Dorsolateral prefrontal cortex (tissue), 120 donors: ENCODE measurements at regions of chr1 and their contacts with region 1.

Region 1: GRCh38 chr1:179293340-179294327 is at the start of gene SOAT1:
- DNase-seq: peak; percentile 88 to 98 (median 95)
- H3K4me3 ChIP-seq: peak within 1 kb of the TSS; percentile 64 to 96 (median 85)
- H3K27ac ChIP-seq: peak within 1 kb of the TSS; percentile 54 to 94 (median 85)
- H3K27me3 ChIP-seq: no peaks in the 10 kb centered on the region
- CTCF ChIP-seq: peak in 48 of 56 donors; percentile 3 to 66 (median 40)
- total RNA-seq, gene SOAT1: 10.1 to 31.3 (median 18.6) TPM

Region 2: GRCh38 chr1:178869119-178869697 is 424.4 kb before region 1 on chr1:
- intact Hi-C with region 1: no loop called
- DNase-seq: no peak
- H3K4me3 ChIP-seq: peak overlapping the region in 30 of 59 donors; percentile 0 to 53 (median 24)
- H3K27ac ChIP-seq: no peak overlapping the region
- H3K27me3 ChIP-seq: no peaks in the 10 kb centered on the region
- CTCF ChIP-seq: no peak

Region 3: DNA sequence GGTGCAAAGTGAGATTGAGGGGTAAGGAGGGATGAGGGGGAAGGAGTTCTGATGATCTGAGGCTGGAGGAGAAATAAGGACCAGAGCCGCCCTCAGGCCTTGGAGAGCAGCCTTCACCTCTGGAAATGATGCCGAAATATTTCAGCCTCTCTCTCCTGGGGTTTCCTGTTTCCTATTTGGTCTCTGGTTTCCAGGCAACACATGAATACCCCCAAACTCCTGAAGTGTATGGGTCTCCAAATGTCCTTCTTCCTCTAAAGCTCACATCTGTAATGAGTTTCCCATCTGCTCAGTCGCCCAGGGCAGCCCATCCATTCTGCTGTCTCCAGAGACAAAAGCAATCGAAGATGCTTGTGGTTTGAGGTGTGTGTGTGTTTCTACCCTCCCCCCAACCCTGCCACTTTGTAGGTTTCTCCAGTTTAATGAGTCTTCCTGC is 319.9 kb before region 1 on chr1:
- intact Hi-C with region 1: no loop called
- DNase-seq: no peak
- H3K4me3 ChIP-seq: no peak overlapping the region
- H3K27ac ChIP-seq: no peak overlapping the region
- H3K27me3 ChIP-seq: no peaks in the 10 kb centered on the region
- CTCF ChIP-seq: no peak

Region 4: DNA sequence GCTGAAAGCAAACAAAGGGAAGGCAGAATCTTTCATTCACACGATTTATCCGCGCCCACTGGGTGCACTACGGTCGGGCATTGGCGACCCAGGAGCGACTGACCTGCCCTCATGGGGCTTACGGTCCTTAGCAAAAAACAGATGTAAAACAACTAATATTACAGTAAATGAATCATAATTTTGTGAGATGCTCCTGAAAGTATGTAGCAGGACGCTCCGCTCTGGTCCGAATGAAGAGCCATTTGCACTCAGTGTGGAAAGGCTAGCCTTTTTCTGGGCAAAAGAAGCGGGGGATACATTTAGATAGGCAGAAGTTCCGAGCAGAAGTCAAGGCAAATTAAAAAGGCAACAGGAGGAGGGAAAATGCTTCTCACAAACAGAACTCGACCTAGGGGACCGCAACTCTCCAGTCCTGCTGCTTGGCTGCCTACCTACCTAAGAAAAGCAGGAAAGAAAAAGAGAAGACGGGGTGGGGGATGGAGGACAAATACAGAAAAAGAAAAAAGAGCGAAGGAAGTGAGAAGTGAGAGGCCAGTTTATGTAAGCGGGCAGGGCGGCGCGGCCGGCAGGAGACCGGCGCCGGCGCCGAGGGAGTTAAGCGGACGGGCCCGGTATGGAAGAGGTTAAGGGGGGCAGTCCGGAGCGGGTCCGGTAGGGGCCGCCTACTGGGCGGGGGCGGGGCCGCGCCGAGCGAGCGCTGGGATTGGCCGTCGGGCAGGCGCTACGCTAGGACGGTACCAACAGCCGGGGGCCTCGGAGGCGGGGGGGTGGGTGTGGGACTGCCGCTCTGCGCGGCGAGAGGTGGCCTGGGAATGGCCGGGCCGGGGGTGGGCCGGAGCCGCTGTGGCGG is 268.3 kb before region 1 on chr1 and contains the start of gene FAM20B:
- intact Hi-C with region 1: loop called (anchors 10 kb)
- DNase-seq: peak; percentile 85 to 95 (median 91)
- H3K4me3 ChIP-seq: peak within 1 kb of the TSS; percentile 72 to 99 (median 92)
- H3K27ac ChIP-seq: peak within 1 kb of the TSS in 58 of 59 donors; percentile 49 to 95 (median 86)
- H3K27me3 ChIP-seq: no peaks in the 10 kb centered on the region
- CTCF ChIP-seq: peak in 9 of 56 donors; percentile 0 to 25 (median 8)
- total RNA-seq, gene FAM20B: 36.3 to 88.4 (median 59.5) TPM

Region 5: GRCh38 chr1:179121159-179121938 is 172.3 kb before region 1 on chr1:
- intact Hi-C with region 1: loop called (anchors 2 to 10 kb)
- DNase-seq: no peak
- H3K4me3 ChIP-seq: no peak overlapping the region
- H3K27ac ChIP-seq: peak overlapping the region in 4 of 59 donors; percentile 3 to 59 (median 14)
- H3K27me3 ChIP-seq: no peaks in the 10 kb centered on the region
- CTCF ChIP-seq: peak; percentile 41 to 82 (median 68)

Region 6: GRCh38 chr1:179229214-179230140 is 64.2 kb before region 1 on chr1 and contains the start of gene ABL2:
- intact Hi-C with region 1: loop called in 1 of 2 experiments (anchors 1 kb)
- DNase-seq: peak in 7 of 10 donors; percentile 16 to 64 (median 44)
- H3K4me3 ChIP-seq: peak within 1 kb of the TSS; percentile 67 to 98 (median 93)
- H3K27ac ChIP-seq: peak within 1 kb of the TSS in 58 of 59 donors; percentile 45 to 96 (median 87)
- H3K27me3 ChIP-seq: no peaks in the 10 kb centered on the region
- CTCF ChIP-seq: peak in 4 of 56 donors; percentile 6 to 22 (median 16)
- total RNA-seq, gene ABL2: 29.3 to 50.9 (median 40.0) TPM